ENCODE measurements at regions of chr1 and their contacts with region 1.

Region 1: DNA sequence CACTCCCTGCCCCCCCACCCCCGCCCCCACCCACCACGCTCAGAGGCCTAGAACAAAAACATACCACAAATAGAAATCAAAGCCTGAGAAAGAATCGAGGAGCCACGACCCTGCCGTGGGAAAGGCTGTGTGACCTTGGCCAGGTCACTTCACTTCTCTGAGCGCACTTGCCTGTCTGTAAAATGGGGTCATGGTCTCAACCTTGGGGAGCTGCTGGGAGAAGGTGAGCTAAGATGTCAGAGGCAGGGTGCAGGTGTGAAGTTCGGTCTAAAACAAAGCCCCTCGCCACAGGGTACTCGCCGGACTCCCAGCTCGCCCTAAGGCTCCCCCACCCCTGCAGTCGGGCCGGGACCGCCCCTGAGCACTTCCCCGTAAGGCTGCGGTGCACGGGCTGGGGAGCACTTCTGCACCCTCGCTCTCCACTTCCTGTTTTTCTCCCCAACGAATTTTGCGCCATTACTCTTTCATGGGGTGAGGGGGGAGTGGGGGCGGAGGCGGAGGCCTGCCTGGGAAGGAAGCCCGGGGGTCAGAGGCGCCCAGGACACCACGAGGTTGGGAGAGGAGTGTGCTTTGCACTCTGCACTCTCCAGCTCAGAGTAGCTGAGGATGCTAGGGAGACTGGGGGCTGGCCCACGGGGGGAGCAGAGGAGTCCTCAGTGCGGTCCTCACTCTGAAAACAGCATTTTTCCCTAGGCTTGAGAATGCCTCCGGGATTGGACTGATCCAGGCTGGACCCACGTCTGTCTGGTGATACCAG is 21.9 kb upstream of the PIK3CD start:
- DNase-seq: peak; percentile 91
- ATAC-seq: peak; percentile 40
- H3K4me3 Mint-ChIP-seq: peak overlapping the region; percentile 88
- H3K27ac Mint-ChIP-seq: peak overlapping the region; percentile 98
- H3K4me1 Mint-ChIP-seq: peaks cover 63% of the 10 kb centered on the region
- H3K27me3 Mint-ChIP-seq: no peaks in the 10 kb centered on the region

Region 2: GRCh38 chr1:9580942-9581341 is 48.7 kb before region 1 on chr1:
- CTCF ChIA-PET with region 1: no interaction called
- POLR2A ChIA-PET with region 1: no interaction called
- DNase-seq: no peak
- ATAC-seq: no peak
- H3K4me3 Mint-ChIP-seq: no peak overlapping the region
- H3K27ac Mint-ChIP-seq: no peak overlapping the region
- H3K4me1 Mint-ChIP-seq: no peaks in the 10 kb centered on the region
- H3K27me3 Mint-ChIP-seq: no peaks in the 10 kb centered on the region

Region 3: GRCh38 chr1:9615316-9616063 is 14.1 kb before region 1 on chr1:
- CTCF ChIA-PET with region 1: interaction called, 37 read pairs
- POLR2A ChIA-PET with region 1: interaction called, 9 read pairs
- DNase-seq: peak; percentile 74
- ATAC-seq: peak; percentile 87
- H3K4me3 Mint-ChIP-seq: no peak overlapping the region
- H3K27ac Mint-ChIP-seq: no peak overlapping the region
- H3K4me1 Mint-ChIP-seq: no peaks in the 10 kb centered on the region
- H3K27me3 Mint-ChIP-seq: peaks cover 4% of the 10 kb centered on the region

Region 4: GRCh38 chr1:9651565-9652378 is 22.1 kb after region 1 on chr1 and contains the start of gene PIK3CD:
- CTCF ChIA-PET with region 1: interaction called, 232 read pairs
- POLR2A ChIA-PET with region 1: interaction called, 355 read pairs
- DNase-seq: peak; percentile 59
- ATAC-seq: peak; percentile 42
- H3K4me3 Mint-ChIP-seq: peak within 1 kb of the TSS; percentile 96
- H3K27ac Mint-ChIP-seq: peak within 1 kb of the TSS; percentile 95
- H3K4me1 Mint-ChIP-seq: peaks cover 58% of the 10 kb centered on the region
- H3K27me3 Mint-ChIP-seq: no peaks in the 10 kb centered on the region
- total RNA-seq, gene PIK3CD: 283 to 285 TPM

Region 5: DNA sequence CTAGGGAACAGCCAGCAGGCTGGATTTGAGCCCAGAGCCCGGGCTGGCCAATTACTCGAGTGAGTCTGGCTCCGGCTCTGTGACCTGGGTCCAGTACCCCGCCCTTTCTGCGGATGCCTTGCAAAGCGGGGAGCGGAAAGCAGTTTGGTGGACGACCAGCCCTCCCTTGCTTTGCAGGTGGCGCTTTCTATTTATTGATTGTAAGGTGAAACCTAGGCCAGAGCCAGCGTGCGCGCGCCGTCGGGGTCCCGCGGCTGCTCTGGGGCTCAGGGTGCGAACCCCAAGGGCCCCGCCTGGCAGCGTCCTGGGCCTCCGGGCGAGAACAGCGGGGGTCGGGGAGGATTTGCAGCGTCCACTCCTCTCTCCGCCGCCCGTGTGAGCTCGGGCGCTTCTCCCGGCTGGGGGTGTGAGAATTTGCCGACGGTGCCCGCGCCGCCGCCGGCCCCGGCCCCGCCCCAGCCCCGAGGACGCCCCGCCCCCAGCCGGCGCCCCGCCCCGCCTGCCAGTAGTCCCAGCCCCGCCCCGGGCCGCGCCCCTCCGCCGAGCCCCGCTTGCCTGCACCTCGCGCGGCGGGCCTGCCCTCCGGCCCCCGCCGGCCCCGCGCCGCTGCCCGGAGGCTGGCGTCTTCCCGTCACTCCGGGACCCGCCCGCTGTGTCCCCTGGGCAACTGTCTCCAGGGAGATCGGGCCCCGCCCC is 59.5 kb after region 1 on chr1:
- CTCF ChIA-PET with region 1: interaction called, 72 read pairs
- POLR2A ChIA-PET with region 1: interaction called, 22 read pairs
- DNase-seq: peak; percentile 87
- ATAC-seq: peak; percentile 79
- H3K4me3 Mint-ChIP-seq: peak overlapping the region; percentile 78
- H3K27ac Mint-ChIP-seq: peak overlapping the region; percentile 76
- H3K4me1 Mint-ChIP-seq: peaks cover 73% of the 10 kb centered on the region
- H3K27me3 Mint-ChIP-seq: no peaks in the 10 kb centered on the region

Region 6: GRCh38 chr1:9705337-9706093 is 75.9 kb after region 1 on chr1:
- CTCF ChIA-PET with region 1: interaction called, 22 read pairs
- POLR2A ChIA-PET with region 1: interaction called, 5 read pairs
- DNase-seq: no peak
- ATAC-seq: no peak
- H3K4me3 Mint-ChIP-seq: no peak overlapping the region
- H3K27ac Mint-ChIP-seq: peak overlapping the region; percentile 80
- H3K4me1 Mint-ChIP-seq: peaks cover 78% of the 10 kb centered on the region
- H3K27me3 Mint-ChIP-seq: no peaks in the 10 kb centered on the region

Region 7: GRCh38 chr1:9724706-9725476 is 95.3 kb after region 1 on chr1:
- CTCF ChIA-PET with region 1: interaction called, 204 read pairs
- POLR2A ChIA-PET with region 1: interaction called, 32 read pairs
- DNase-seq: peak; percentile 82
- ATAC-seq: peak; percentile 65
- H3K4me3 Mint-ChIP-seq: no peak overlapping the region
- H3K27ac Mint-ChIP-seq: peak overlapping the region; percentile 83
- H3K4me1 Mint-ChIP-seq: peaks cover 81% of the 10 kb centered on the region
- H3K27me3 Mint-ChIP-seq: no peaks in the 10 kb centered on the region

Measured in activated CD8-positive, alpha-beta T cell treated with anti-CD3 and anti-CD28 coated beads, Interleukin-2, amount 10 ng/mL, durations not matched to agents 7 days and 5 days (primary cell).